ENCODE measurements at regions of chr15 and their contacts with region 1.

Region 1: DNA sequence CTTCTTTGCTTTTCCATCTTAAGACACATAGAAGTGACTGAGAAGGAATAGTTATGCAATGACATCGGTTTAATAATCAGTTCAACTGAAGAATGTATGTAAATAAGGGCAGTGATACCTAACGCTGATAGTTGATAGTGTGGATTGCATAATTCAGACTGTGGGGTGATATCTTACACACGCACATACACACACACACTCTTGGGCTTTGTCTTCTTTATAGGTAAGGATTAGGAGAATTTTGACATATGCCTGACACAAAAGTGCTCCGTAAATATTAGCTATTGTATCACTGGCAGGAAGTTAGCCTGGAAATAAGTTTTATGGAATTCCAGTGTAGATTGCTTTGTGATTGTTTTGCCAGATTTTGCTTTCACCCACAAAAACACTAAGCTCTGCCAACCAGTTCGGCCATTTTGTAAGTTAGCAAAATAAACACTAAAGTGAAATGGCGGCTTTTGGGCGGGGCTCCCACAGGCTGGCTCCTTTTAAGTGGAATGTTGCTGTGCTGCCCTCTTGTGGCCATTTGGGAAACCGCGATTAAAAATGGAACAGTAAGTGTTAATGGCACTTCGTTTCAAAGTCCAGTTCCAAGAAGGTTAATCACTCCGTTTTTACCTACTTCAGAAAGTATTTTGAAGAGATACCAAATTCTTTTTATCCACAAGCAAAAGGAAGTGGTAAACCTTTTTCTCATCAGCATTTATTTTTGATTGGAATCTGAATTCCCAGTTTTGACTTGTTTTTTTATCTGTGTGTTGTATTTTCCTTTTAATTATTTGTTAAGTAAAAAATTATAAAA is 17.7 kb downstream of the CHD2 start:
- DNase-seq: peak; percentile 78
- ATAC-seq: peak; percentile 51
- H3K4me3 Mint-ChIP-seq: peak overlapping the region; percentile 41
- H3K27ac Mint-ChIP-seq: peak overlapping the region; percentile 86
- H3K4me1 Mint-ChIP-seq: peaks cover 84% of the 10 kb centered on the region
- H3K27me3 Mint-ChIP-seq: no peaks in the 10 kb centered on the region
- CTCF ChIP-seq: peak; percentile 50

Region 2: GRCh38 chr15:92797168-92797951 is 120.4 kb before region 1 on chr15:
- CTCF ChIA-PET with region 1: interaction called, 115 read pairs
- POLR2A ChIA-PET with region 1: interaction called, 37 read pairs
- intact Hi-C with region 1: loop called (anchors 1 kb)
- DNase-seq: no peak
- ATAC-seq: peak; percentile 84
- H3K4me3 Mint-ChIP-seq: no peak overlapping the region
- H3K27ac Mint-ChIP-seq: peak overlapping the region; percentile 68
- H3K4me1 Mint-ChIP-seq: peaks cover 6% of the 10 kb centered on the region
- H3K27me3 Mint-ChIP-seq: no peaks in the 10 kb centered on the region
- CTCF ChIP-seq: peak; percentile 22

Region 3: GRCh38 chr15:92825989-92826384 is 91.8 kb before region 1 on chr15:
- CTCF ChIA-PET with region 1: interaction called, 5 read pairs
- POLR2A ChIA-PET with region 1: interaction called, 17 read pairs
- intact Hi-C with region 1: loop called (anchors 1 kb)
- DNase-seq: no peak
- ATAC-seq: no peak
- H3K4me3 Mint-ChIP-seq: no peak overlapping the region
- H3K27ac Mint-ChIP-seq: peak overlapping the region; percentile 0
- H3K4me1 Mint-ChIP-seq: peaks cover 62% of the 10 kb centered on the region
- H3K27me3 Mint-ChIP-seq: no peaks in the 10 kb centered on the region
- CTCF ChIP-seq: no peak

Region 4: GRCh38 chr15:92845126-92845508 is 72.7 kb before region 1 on chr15:
- CTCF ChIA-PET with region 1: interaction called, 3 read pairs
- POLR2A ChIA-PET with region 1: interaction called, 6 read pairs
- intact Hi-C with region 1: loop called (anchors 2 kb)
- DNase-seq: no peak
- ATAC-seq: peak; percentile 50
- H3K4me3 Mint-ChIP-seq: peak overlapping the region; percentile 73
- H3K27ac Mint-ChIP-seq: peak overlapping the region; percentile 95
- H3K4me1 Mint-ChIP-seq: peaks cover 71% of the 10 kb centered on the region
- H3K27me3 Mint-ChIP-seq: no peaks in the 10 kb centered on the region
- CTCF ChIP-seq: no peak

Region 5: GRCh38 chr15:92903941-92904831 is 13.6 kb before region 1 on chr15:
- CTCF ChIA-PET with region 1: interaction called, 28 read pairs
- POLR2A ChIA-PET with region 1: interaction called, 169 read pairs
- intact Hi-C with region 1: loop called (anchors 1 kb)
- DNase-seq: peak; percentile 99
- ATAC-seq: peak; percentile 81
- H3K4me3 Mint-ChIP-seq: peak overlapping the region; percentile 97
- H3K27ac Mint-ChIP-seq: peak overlapping the region; percentile 100
- H3K4me1 Mint-ChIP-seq: peaks cover 73% of the 10 kb centered on the region
- H3K27me3 Mint-ChIP-seq: no peaks in the 10 kb centered on the region
- CTCF ChIP-seq: no peak

Region 6: GRCh38 chr15:92938387-92938786 is 20.6 kb after region 1 on chr15:
- CTCF ChIA-PET with region 1: no interaction called
- POLR2A ChIA-PET with region 1: interaction called, 3 read pairs
- intact Hi-C with region 1: loop called (anchors 2 kb)
- DNase-seq: no peak
- ATAC-seq: no peak
- H3K4me3 Mint-ChIP-seq: no peak overlapping the region
- H3K27ac Mint-ChIP-seq: no peak overlapping the region
- H3K4me1 Mint-ChIP-seq: peaks cover 6% of the 10 kb centered on the region
- H3K27me3 Mint-ChIP-seq: no peaks in the 10 kb centered on the region
- CTCF ChIP-seq: no peak

Measured in activated B cell treated with CpG ODN at 0.5 μM for 24 hours (primary cell).